Gastrocnemius medialis (tissue), 4 donors: ENCODE measurements at regions of chr4 and their contacts with region 1.

Region 1: GRCh38 chr4:8391972-8392371 is 48.6 kb downstream of the ACOX3 start:
- DNase-seq: peak; percentile 80 to 87
- ATAC-seq: peak; percentile 86 to 88
- H3K4me3 ChIP-seq: no peak overlapping the region
- H3K27ac ChIP-seq: peak overlapping the region; percentile 78 to 87 (median 79)
- H3K4me1 ChIP-seq: peaks cover 42 to 48% of the 10 kb centered on the region in 2 donors
- H3K27me3 ChIP-seq: no peaks in the 10 kb centered on the region
- CTCF ChIP-seq: no peak
- POLR2A ChIP-seq: peak in 1 of 2 donors; percentile 26

Region 2: GRCh38 chr4:8315435-8316250 is 76.3 kb before region 1 on chr4:
- in situ Hi-C with region 1: loop called in 1 of 4 experiments (anchors 10 kb)
- intact Hi-C with region 1: no loop called
- DNase-seq: peak in 1 of 2 donors; percentile 54
- ATAC-seq: peak in 1 of 2 donors; percentile 57
- H3K4me3 ChIP-seq: no peak overlapping the region
- H3K27ac ChIP-seq: no peak overlapping the region
- H3K4me1 ChIP-seq: peaks cover 20 to 25% of the 10 kb centered on the region in 2 donors
- H3K27me3 ChIP-seq: no peaks in the 10 kb centered on the region
- CTCF ChIP-seq: no peak
- POLR2A ChIP-seq: no peak

Region 3: GRCh38 chr4:8330821-8331574 is 61.0 kb before region 1 on chr4:
- in situ Hi-C with region 1: loop called in 1 of 4 experiments (anchors 10 kb)
- intact Hi-C with region 1: loop called (anchors 5 kb)
- DNase-seq: peak; percentile 82 to 93
- ATAC-seq: peak; percentile 88 to 91
- H3K4me3 ChIP-seq: no peak overlapping the region
- H3K27ac ChIP-seq: peak overlapping the region; percentile 59 to 92 (median 78)
- H3K4me1 ChIP-seq: peaks cover 23 to 25% of the 10 kb centered on the region in 2 donors
- H3K27me3 ChIP-seq: no peaks in the 10 kb centered on the region
- CTCF ChIP-seq: peak in 1 of 5 experiments; percentile 10
- POLR2A ChIP-seq: peak in 1 of 2 donors; percentile 26

Region 4: DNA sequence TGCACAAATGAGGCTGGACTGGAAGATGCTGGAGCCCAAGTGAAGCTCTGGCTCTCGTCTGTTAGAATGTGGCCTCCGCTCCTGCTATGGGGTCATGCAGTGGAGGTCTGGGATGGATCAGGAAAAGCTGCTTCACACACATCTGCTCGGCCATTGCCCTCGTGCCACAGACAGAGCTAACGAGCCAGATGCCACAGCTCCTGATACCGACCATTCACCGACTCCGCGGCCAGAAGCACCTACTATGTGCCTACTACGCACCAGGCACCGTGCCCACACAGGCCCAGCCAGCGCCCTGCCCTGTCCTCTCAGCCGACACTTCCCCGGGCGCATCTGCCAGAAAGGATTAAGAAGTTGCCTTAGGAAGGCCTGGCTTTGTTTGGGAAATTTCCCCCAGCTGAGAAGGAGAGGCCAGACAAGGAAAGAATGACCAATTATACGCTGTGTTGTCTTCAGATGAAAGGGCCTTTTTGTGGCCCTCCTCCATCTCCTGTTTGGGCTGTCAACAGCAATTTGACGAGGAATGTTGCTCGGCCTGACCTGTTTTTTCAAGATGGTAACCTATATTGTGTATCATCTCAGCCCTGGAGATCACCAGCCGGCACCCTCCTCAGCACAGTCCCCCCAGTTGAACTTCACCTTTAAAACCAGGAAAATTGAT is 445.3 kb after region 1 on chr4:
- in situ Hi-C with region 1: no loop called
- intact Hi-C with region 1: no loop called
- DNase-seq: no peak
- ATAC-seq: no peak
- H3K4me3 ChIP-seq: no peak overlapping the region
- H3K27ac ChIP-seq: no peak overlapping the region
- H3K4me1 ChIP-seq: no peaks in the 10 kb centered on the region
- H3K27me3 ChIP-seq: peaks cover 0 to 12% (median 0%) of the 10 kb centered on the region in 3 donors
- CTCF ChIP-seq: no peak
- POLR2A ChIP-seq: no peak